OCI-LY7 (cell line): ENCODE measurements at regions of chr1 and their contacts with region 1.

Region 1: GRCh38 chr1:46442317-46443161 is 47.1 kb upstream of the DMBX1 start:
- DNase-seq: peak; percentile 70
- H3K4me3 ChIP-seq: no peak overlapping the region
- H3K27ac ChIP-seq: no peak overlapping the region
- H3K4me1 ChIP-seq: peaks cover 4% of the 10 kb centered on the region
- CTCF ChIP-seq: peak; percentile 89

Region 2: DNA sequence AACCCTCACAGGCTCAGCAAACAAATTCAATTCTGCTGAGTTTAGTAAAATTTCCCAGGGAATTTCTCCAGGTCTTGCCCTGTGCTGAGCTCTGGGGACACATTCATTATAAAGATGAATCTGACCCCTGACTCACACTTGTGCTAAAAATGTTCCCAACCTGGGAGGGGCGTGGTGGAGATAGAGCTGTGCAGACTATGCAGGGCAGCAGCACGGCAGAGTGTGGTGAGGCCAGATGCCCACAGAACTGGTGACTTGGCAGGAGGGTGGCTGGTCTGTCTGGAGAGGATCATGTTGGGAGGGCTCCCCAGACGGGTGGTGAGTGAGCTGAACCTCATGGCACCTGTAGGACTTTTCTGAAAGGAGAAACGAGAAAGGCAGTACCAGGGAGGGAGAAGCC is 16.8 kb before region 1 on chr1:
- CTCF ChIA-PET with region 1: no interaction called
- POLR2A ChIA-PET with region 1: no interaction called
- intact Hi-C with region 1: no loop called
- DNase-seq: no peak
- H3K4me3 ChIP-seq: no peak overlapping the region
- H3K27ac ChIP-seq: no peak overlapping the region
- H3K4me1 ChIP-seq: no peaks in the 10 kb centered on the region
- CTCF ChIP-seq: no peak

Region 3: GRCh38 chr1:46527474-46528296 is 85.1 kb after region 1 on chr1:
- CTCF ChIA-PET with region 1: no interaction called
- POLR2A ChIA-PET with region 1: no interaction called
- intact Hi-C with region 1: loop called (anchors 1 kb)
- DNase-seq: peak; percentile 67
- H3K4me3 ChIP-seq: no peak overlapping the region
- H3K27ac ChIP-seq: no peak overlapping the region
- H3K4me1 ChIP-seq: no peaks in the 10 kb centered on the region
- CTCF ChIP-seq: peak; percentile 91

Region 4: GRCh38 chr1:46724991-46725735 is 282.6 kb after region 1 on chr1:
- CTCF ChIA-PET with region 1: no interaction called
- POLR2A ChIA-PET with region 1: no interaction called
- intact Hi-C with region 1: loop called (anchors 5 kb)
- DNase-seq: peak; percentile 77
- H3K4me3 ChIP-seq: no peak overlapping the region
- H3K27ac ChIP-seq: no peak overlapping the region
- H3K4me1 ChIP-seq: no peaks in the 10 kb centered on the region
- CTCF ChIP-seq: peak; percentile 87